Activated CD8-positive, alpha-beta T cell treated with anti-CD3 and anti-CD28 coated beads for 36 hours (primary cell): ENCODE measurements at regions of chr3 and their contacts with region 1.

Region 1: DNA sequence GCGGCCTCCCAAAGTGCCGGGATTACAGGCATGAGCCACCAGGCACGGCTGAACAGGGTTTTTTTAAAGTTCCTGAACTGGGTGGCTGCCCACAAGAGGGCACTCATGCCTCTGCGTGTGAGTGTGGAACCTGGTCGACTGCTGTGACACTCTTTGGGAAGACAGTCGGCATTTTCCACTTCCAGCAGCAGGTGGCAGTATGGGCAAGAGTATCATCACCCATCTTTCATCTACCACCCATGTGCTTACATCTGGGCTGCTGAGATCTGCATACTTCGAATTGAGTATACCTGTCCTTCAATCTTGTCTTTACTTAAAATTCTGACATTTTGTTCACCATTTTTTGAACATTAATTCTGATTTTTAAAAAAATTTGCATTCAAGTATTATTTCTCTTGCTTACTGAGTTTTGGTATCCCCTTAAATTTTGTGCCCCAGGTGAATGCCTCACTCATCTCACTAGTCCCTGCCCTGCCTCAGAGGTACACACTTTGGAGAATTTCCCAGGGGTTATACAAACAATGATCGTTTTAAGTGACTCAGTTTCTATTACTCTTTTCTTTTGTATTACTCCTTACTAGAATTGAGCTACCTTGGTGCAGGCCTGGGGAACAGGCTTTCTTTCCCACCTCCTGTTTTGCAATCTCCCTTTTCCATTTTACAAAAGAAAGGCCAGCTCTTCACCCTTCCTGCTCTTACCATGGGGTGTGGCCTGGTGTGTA is 11.8 kb downstream of the CLEC3B start:
- DNase-seq: peak; percentile 97
- ATAC-seq: peak; percentile 89
- H3K4me3 Mint-ChIP-seq: no peak overlapping the region
- H3K27ac Mint-ChIP-seq: no peak overlapping the region
- H3K4me1 Mint-ChIP-seq: peaks cover 29% of the 10 kb centered on the region
- H3K27me3 Mint-ChIP-seq: peaks cover 38% of the 10 kb centered on the region
- CTCF ChIP-seq: peak; percentile 90

Region 2: GRCh38 chr3:44685128-44685800 is 352.6 kb before region 1 on chr3:
- CTCF ChIA-PET with region 1: no interaction called
- POLR2A ChIA-PET with region 1: no interaction called
- intact Hi-C with region 1: no loop called
- DNase-seq: peak; percentile 86
- ATAC-seq: peak; percentile 95
- H3K4me3 Mint-ChIP-seq: peak overlapping the region; percentile 76
- H3K27ac Mint-ChIP-seq: peak overlapping the region; percentile 73
- H3K4me1 Mint-ChIP-seq: peaks cover 12% of the 10 kb centered on the region
- H3K27me3 Mint-ChIP-seq: peaks cover 13% of the 10 kb centered on the region
- CTCF ChIP-seq: no peak

Region 3: GRCh38 chr3:45055411-45056143 is 17.7 kb after region 1 on chr3:
- CTCF ChIA-PET with region 1: interaction called, 66 read pairs
- POLR2A ChIA-PET with region 1: no interaction called
- intact Hi-C with region 1: no loop called
- DNase-seq: peak; percentile 42
- ATAC-seq: peak; percentile 39
- H3K4me3 Mint-ChIP-seq: no peak overlapping the region
- H3K27ac Mint-ChIP-seq: no peak overlapping the region
- H3K4me1 Mint-ChIP-seq: peaks cover 14% of the 10 kb centered on the region
- H3K27me3 Mint-ChIP-seq: peaks cover 11% of the 10 kb centered on the region
- CTCF ChIP-seq: peak; percentile 34

Region 4: DNA sequence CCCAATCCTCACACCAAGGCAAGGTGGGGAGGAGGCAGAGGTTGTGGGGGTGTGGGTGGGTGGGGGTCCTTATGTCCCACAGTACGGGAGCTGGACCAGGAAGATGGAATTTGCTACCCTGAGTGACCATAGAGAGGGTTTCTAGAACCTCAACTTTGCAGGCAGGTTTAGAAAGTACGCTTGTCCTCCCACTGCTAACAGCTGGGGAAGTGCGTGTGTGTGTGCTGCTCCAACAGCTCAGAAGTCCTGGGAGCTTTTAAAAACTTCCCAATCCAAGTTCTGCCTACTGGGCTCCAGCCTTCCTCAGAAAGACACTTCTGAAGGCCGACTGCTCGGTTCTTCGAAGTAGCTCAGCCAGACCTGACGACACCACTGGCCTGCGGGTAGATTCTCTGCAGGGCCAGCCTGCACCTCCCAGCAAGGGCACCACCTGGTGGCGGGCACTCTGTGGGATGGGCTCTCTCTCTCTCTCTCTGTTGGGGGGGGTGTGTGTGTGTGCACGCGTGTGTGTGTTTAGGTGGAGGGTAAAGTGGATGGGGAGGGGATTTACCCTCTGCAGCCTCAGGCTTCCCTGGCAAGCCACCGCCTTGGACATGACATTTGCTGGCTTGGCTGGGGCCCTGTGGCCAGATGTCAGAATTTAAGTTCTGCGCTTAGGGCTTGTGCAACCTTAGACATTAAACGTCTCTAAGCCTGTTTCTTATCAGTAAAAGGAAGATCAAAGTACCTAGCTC is 172.6 kb after region 1 on chr3:
- CTCF ChIA-PET with region 1: interaction called, 390 read pairs
- POLR2A ChIA-PET with region 1: no interaction called
- intact Hi-C with region 1: loop called (anchors 2 kb)
- DNase-seq: peak; percentile 83
- ATAC-seq: peak; percentile 94
- H3K4me3 Mint-ChIP-seq: no peak overlapping the region
- H3K27ac Mint-ChIP-seq: no peak overlapping the region
- H3K4me1 Mint-ChIP-seq: peaks cover 6% of the 10 kb centered on the region
- H3K27me3 Mint-ChIP-seq: peaks cover 11% of the 10 kb centered on the region
- CTCF ChIP-seq: peak; percentile 71

Region 5: GRCh38 chr3:45223889-45224727 is 186.2 kb after region 1 on chr3:
- CTCF ChIA-PET with region 1: interaction called, 14 read pairs
- POLR2A ChIA-PET with region 1: no interaction called
- intact Hi-C with region 1: no loop called
- DNase-seq: peak; percentile 72
- ATAC-seq: no peak
- H3K4me3 Mint-ChIP-seq: peak overlapping the region; percentile 69
- H3K27ac Mint-ChIP-seq: no peak overlapping the region
- H3K4me1 Mint-ChIP-seq: peaks cover 12% of the 10 kb centered on the region
- H3K27me3 Mint-ChIP-seq: peaks cover 54% of the 10 kb centered on the region
- CTCF ChIP-seq: no peak